Mammary epithelial cell (primary cell): ENCODE measurements at regions of chr13 and their contacts with region 1.

Region 1: GRCh38 chr13:50529154-50529882 is 314.2 kb downstream of the DLEU7 start:
- DNase-seq: peak; percentile 86
- H3K4me3 ChIP-seq: no peak overlapping the region
- H3K27ac ChIP-seq: peak overlapping the region; percentile 54
- H3K4me1 ChIP-seq: peaks cover 18% of the 10 kb centered on the region
- H3K27me3 ChIP-seq: no peaks in the 10 kb centered on the region
- CTCF ChIP-seq: no peak

Region 2: GRCh38 chr13:49976314-49977258 is 552.7 kb before region 1 on chr13:
- CTCF ChIA-PET with region 1: interaction called, 3 read pairs
- dilution Hi-C with region 1: no loop called
- in situ Hi-C with region 1: loop called (anchors 25 kb)
- intact Hi-C with region 1: loop called (anchors 1 kb)
- DNase-seq: peak; percentile 69
- H3K4me3 ChIP-seq: no peak overlapping the region
- H3K27ac ChIP-seq: peak overlapping the region; percentile 25
- H3K4me1 ChIP-seq: peaks cover 11% of the 10 kb centered on the region
- H3K27me3 ChIP-seq: no peaks in the 10 kb centered on the region
- CTCF ChIP-seq: peak; percentile 92 to 95

Region 3: DNA sequence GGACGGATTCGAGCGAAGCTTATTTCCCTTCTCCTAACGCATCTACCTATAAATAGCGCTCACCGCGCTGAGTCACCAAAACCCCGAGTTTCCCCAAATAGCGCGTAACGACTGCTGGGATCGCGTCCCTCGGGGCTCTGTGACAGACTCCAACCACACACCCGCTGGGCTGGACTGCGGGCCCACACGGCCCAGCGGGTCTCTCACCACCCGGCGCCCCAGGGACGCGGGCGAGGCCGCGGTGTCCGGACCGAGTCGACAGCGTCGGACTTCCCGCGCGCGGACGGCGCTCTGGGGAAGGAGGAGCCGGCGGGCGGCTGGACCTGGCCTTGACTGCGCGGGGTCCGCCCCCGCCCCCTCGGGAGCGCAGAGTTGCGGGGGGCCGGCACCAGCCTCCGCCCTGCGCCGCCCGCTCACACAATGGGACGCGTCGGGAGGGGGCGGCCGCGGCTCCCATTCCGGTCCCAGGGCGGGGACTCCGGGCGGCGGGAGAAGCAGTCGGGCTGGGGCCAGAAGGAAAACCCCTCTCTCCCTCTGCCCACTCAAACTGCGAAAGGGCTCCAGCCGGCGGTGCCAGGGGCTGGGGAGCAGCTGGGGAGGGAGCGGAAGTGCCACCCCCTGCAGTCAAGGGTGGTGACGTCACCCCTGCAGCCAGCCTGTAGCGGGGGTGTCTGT is 405.3 kb before region 1 on chr13:
- CTCF ChIA-PET with region 1: no interaction called
- dilution Hi-C with region 1: no loop called
- in situ Hi-C with region 1: no loop called
- intact Hi-C with region 1: loop called (anchors 2 kb)
- DNase-seq: peak; percentile 92
- H3K4me3 ChIP-seq: peak overlapping the region; percentile 73 to 97 (median 92)
- H3K27ac ChIP-seq: peak overlapping the region; percentile 80
- H3K4me1 ChIP-seq: peaks cover 16% of the 10 kb centered on the region
- H3K27me3 ChIP-seq: no peaks in the 10 kb centered on the region
- CTCF ChIP-seq: peak in 1 of 2 donors; percentile 18

Region 4: GRCh38 chr13:50268500-50268899 is 260.8 kb before region 1 on chr13:
- CTCF ChIA-PET with region 1: no interaction called
- dilution Hi-C with region 1: no loop called
- in situ Hi-C with region 1: no loop called
- intact Hi-C with region 1: loop called (anchors 10 kb)
- DNase-seq: no peak
- H3K4me3 ChIP-seq: no peak overlapping the region
- H3K27ac ChIP-seq: no peak overlapping the region
- H3K4me1 ChIP-seq: no peaks in the 10 kb centered on the region
- H3K27me3 ChIP-seq: no peaks in the 10 kb centered on the region
- CTCF ChIP-seq: peak in 1 of 2 donors; percentile 10

Region 5: GRCh38 chr13:51070005-51070649 is 540.8 kb after region 1 on chr13:
- CTCF ChIA-PET with region 1: no interaction called
- dilution Hi-C with region 1: no loop called
- in situ Hi-C with region 1: no loop called
- intact Hi-C with region 1: loop called (anchors 5 kb)
- DNase-seq: peak; percentile 64
- H3K4me3 ChIP-seq: no peak overlapping the region
- H3K27ac ChIP-seq: no peak overlapping the region
- H3K4me1 ChIP-seq: peaks cover 19% of the 10 kb centered on the region
- H3K27me3 ChIP-seq: peaks cover 2% of the 10 kb centered on the region
- CTCF ChIP-seq: peak; percentile 97 to 98